Heart left ventricle (tissue), 16 donors: ENCODE measurements at regions of chr4 and their contacts with region 1.

Region 1: DNA sequence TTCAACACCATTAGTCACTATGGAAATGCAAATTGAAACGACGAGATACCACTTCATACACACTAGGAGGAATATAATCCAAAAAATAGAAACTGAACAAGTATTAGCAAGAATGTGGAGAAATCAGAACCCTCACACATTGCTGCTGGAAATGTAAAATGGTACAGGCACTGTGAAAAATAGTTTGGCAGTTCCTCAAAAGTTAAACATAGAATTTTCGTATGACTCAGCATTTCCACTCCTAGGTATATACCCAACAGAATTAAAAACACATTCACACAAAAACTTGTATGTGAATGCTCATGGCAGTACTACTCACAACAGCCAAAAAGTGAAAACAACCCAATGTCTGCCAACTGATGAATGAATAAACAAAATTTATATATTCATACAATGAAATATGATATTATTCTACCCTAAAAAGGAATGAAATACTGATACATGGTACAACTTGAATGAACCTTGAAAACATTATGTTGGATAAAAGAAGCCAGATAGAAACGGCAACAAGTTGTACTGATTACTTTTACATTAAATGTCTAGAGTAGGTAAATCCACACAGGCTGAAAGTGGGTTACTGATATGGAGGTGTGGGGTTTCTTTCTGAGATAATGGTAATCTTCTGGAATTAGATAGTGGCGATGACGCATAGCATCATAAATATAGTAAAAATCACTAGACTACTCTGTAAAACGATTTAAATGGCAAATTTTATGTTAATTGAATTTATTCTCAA is 22.3 kb downstream of the TEC start:
- DNase-seq: no peak
- ATAC-seq: peak in 3 of 4 donors; percentile 52 to 67 (median 56)
- H3K4me3 ChIP-seq: no peak overlapping the region
- H3K27ac ChIP-seq: no peak overlapping the region
- H3K4me1 ChIP-seq: peaks cover 0 to 18% (median 3%) of the 10 kb centered on the region in 12 donors
- H3K27me3 ChIP-seq: no peaks in the 10 kb centered on the region
- CTCF ChIP-seq: no peak
- POLR2A ChIP-seq: no peak

Region 2: DNA sequence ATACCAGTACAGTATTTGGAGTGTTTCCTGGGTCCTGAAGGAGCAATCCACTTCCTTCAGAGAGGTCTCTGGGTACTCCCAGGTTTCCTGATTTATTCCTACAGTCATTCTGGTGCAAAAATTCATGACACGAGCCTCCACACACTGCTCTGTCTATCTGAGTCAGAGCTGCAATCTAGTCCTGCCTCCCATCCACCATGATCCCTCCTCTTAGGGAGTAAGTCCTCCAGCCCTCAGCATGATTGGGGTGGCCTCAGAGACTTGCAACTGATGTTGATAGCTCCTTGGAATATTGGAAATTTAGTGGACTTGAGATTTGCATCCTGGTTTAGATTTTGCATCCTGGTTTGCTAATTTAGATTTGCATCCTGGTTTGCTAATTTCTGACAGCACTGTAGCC is 251.3 kb before region 1 on chr4:
- intact Hi-C with region 1: no loop called
- DNase-seq: no peak
- ATAC-seq: no peak
- H3K4me3 ChIP-seq: no peak overlapping the region
- H3K27ac ChIP-seq: no peak overlapping the region
- H3K4me1 ChIP-seq: no peaks in the 10 kb centered on the region
- H3K27me3 ChIP-seq: no peaks in the 10 kb centered on the region
- CTCF ChIP-seq: no peak
- POLR2A ChIP-seq: no peak

Region 3: GRCh38 chr4:48180234-48180633 is 67.1 kb before region 1 on chr4:
- intact Hi-C with region 1: loop called in 1 of 10 experiments (anchors 10 kb)
- DNase-seq: no peak
- ATAC-seq: no peak
- H3K4me3 ChIP-seq: no peak overlapping the region
- H3K27ac ChIP-seq: no peak overlapping the region
- H3K4me1 ChIP-seq: no peaks in the 10 kb centered on the region
- H3K27me3 ChIP-seq: no peaks in the 10 kb centered on the region
- CTCF ChIP-seq: no peak
- POLR2A ChIP-seq: no peak

Region 4: DNA sequence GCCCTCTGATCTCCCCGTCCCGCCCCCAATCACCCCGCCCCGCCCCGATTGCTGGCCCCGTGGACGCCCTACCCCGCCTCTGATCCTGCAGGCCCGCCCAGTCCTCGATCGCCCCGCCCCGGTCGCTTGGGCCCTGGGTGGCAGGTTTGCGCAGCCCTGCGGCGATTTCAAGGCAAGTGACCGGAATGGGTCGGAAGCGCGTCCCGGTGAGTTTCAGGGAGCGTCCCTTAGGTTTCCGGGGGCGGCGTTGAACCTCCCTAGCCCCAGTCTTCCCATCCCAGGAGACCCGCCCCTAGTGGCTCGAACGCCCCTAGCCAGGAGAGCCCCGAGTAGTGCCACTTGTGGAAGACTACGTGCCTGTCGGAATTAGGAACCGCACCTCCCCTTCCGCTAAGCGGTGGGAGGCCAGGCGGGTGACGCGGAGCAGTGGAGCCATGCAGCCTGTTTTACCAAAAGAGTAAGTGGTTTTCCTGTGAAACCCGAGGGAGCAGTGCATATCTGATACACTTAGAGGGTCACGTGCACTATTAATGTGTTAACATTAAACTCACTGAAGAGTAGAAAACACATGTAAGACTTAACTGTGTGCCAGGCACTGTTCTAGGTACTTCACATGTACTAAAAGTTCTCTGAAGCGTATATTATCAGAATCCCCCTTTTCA is 22.7 kb after region 1 on chr4:
- intact Hi-C with region 1: no loop called
- DNase-seq: peak; percentile 92 to 96 (median 94)
- ATAC-seq: peak; percentile 98 to 99 (median 98)
- H3K4me3 ChIP-seq: peak overlapping the region; percentile 69 to 92 (median 84)
- H3K27ac ChIP-seq: peak overlapping the region in 11 of 12 donors; percentile 73 to 91 (median 83)
- H3K4me1 ChIP-seq: peaks cover 0 to 37% (median under 1%) of the 10 kb centered on the region in 12 donors
- H3K27me3 ChIP-seq: no peaks in the 10 kb centered on the region
- CTCF ChIP-seq: peak in 9 of 12 donors; percentile 6 to 49 (median 32)
- POLR2A ChIP-seq: peak in 1 of 2 donors; percentile 22